ENCODE measurements at regions of chr11 and their contacts with region 1.

Region 1: GRCh38 chr11:125625630-125626287 is 796 bp downstream of the CHEK1 start:
- DNase-seq: peak; percentile 82
- ATAC-seq: peak; percentile 94
- H3K4me3 ChIP-seq: peak overlapping the region; percentile 79 to 90 (median 79)
- H3K27ac ChIP-seq: peak overlapping the region; percentile 87
- H3K4me1 ChIP-seq: peaks cover 29% of the 10 kb centered on the region
- H3K27me3 ChIP-seq: no peaks in the 10 kb centered on the region; a peak in 1 of 5 replicates
- CTCF ChIP-seq: peak; percentile 42
- EP300 ChIP-seq: peak in 1 of 2 experiments; percentile 45; a peak in 1 of 4 replicates
- POLR2A ChIP-seq: peak; percentile 61; a peak in 3 of 4 replicates
- RAD21 ChIP-seq: peak; percentile 42

Region 2: GRCh38 chr11:125568970-125569914 is 56.5 kb before region 1 on chr11 and contains the start of gene EI24:
- CTCF ChIA-PET with region 1: no interaction called
- POLR2A ChIA-PET with region 1: no interaction called
- in situ Hi-C with region 1: no loop called
- intact Hi-C with region 1: loop called (anchors 1 kb)
- DNase-seq: peak; percentile 84
- ATAC-seq: peak; percentile 98
- H3K4me3 ChIP-seq: peak within 1 kb of the TSS; percentile 77 to 93 (median 82)
- H3K27ac ChIP-seq: peak within 1 kb of the TSS; percentile 68
- H3K4me1 ChIP-seq: peaks cover 46% of the 10 kb centered on the region
- H3K27me3 ChIP-seq: no peaks in the 10 kb centered on the region; a peak in 1 of 5 replicates
- CTCF ChIP-seq: peak; percentile 85
- EP300 ChIP-seq: no peak
- POLR2A ChIP-seq: peak; percentile 40 to 70; a peak in 3 of 4 replicates
- RAD21 ChIP-seq: peak; percentile 52; the same call in 1 of the 2 replicates
- total RNA-seq, gene EI24: 126 and 138 TPM in 2 replicates

Region 3: GRCh38 chr11:125592305-125593112 is 33.2 kb before region 1 on chr11 and contains the start of gene STT3A:
- CTCF ChIA-PET with region 1: no interaction called
- POLR2A ChIA-PET with region 1: interaction called, 24 read pairs
- in situ Hi-C with region 1: no loop called
- intact Hi-C with region 1: loop called (anchors 2 kb)
- DNase-seq: peak; percentile 99
- ATAC-seq: peak; percentile 97
- H3K4me3 ChIP-seq: peak within 1 kb of the TSS; percentile 90 to 96 (median 95)
- H3K27ac ChIP-seq: peak within 1 kb of the TSS; percentile 91
- H3K4me1 ChIP-seq: peaks cover 40% of the 10 kb centered on the region
- H3K27me3 ChIP-seq: no peaks in the 10 kb centered on the region; a peak in 1 of 5 replicates
- CTCF ChIP-seq: 0 out of 2 replicates have a peak, but pooled peaks have one; percentile 5
- EP300 ChIP-seq: 0 out of 4 replicates have a peak, but pooled peaks of 1 of the 2 experiments have one; percentile 25
- POLR2A ChIP-seq: peak; percentile 78 to 94
- RAD21 ChIP-seq: no peak
- total RNA-seq, gene STT3A: 141 and 229 TPM in 2 replicates

Region 4: GRCh38 chr11:125649465-125650166 is 23.9 kb after region 1 on chr11:
- CTCF ChIA-PET with region 1: no interaction called
- POLR2A ChIA-PET with region 1: no interaction called
- in situ Hi-C with region 1: no loop called
- intact Hi-C with region 1: no loop called
- DNase-seq: no peak
- ATAC-seq: no peak
- H3K4me3 ChIP-seq: no peak overlapping the region
- H3K27ac ChIP-seq: no peak overlapping the region
- H3K4me1 ChIP-seq: no peaks in the 10 kb centered on the region
- H3K27me3 ChIP-seq: no peaks in the 10 kb centered on the region
- CTCF ChIP-seq: no peak
- EP300 ChIP-seq: no peak
- POLR2A ChIP-seq: no peak
- RAD21 ChIP-seq: no peak

Region 5: DNA sequence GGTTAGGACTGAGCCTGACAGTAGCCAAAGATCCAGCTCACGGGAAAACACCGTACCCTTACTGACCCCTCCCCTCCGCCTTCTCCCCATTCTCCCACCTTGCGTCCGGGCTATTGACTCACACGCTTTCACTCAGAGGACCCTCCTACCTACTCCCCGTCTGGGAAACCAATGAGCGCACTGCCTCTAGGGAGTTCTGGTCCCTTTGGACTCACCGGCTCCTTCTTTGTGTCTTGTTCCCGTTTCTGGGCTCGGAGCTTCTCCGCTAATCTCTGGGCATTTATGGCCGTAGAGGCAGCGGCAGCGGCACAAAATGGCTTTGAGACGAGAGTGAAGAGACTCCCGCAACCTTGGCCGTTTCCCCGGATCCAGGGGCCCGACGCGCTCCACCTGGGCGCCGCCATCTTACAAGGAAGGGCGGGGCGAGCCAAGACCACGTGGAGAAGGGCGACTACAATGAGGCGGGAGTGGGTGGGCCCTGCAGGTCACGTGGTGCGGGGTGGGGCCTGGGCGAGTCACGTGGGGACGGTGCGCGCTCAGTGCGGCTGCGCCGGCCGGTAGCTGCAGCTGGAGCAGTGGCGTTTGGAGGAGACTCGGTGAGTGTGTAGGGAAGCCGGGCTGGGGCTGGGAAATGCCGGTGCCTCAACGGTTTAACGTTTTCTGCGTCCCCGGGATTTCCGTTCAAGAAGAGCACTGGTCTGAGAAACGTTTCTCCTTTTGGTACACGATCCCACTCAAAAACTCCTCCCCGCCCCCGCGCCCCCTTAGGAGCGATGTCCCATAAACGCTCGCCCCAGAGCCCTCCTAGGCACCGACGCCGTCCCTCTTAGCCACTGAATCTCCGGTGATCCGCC is 585.7 kb after region 1 on chr11 and contains the starts of genes FAM118B and RPUSD4:
- CTCF ChIA-PET with region 1: no interaction called
- POLR2A ChIA-PET with region 1: interaction called, 3 read pairs
- in situ Hi-C with region 1: loop called (anchors 25 kb)
- intact Hi-C with region 1: no loop called
- DNase-seq: peak; percentile 90
- ATAC-seq: peak; percentile 93
- H3K4me3 ChIP-seq: peak within 1 kb of the TSS; percentile 76 to 97 (median 90)
- H3K27ac ChIP-seq: peak within 1 kb of the TSS; percentile 82
- H3K4me1 ChIP-seq: peaks cover 42% of the 10 kb centered on the region
- H3K27me3 ChIP-seq: peaks cover 0 to 2% of the 10 kb centered on the region in 2 experiments; a peak in 1 of 5 replicates
- CTCF ChIP-seq: peak; percentile 26; the same call in 1 of the 2 replicates
- EP300 ChIP-seq: no peak
- POLR2A ChIP-seq: peak; percentile 87 to 91
- RAD21 ChIP-seq: 0 out of 2 replicates have a peak, but pooled peaks have one; percentile 6
- total RNA-seq, gene FAM118B: 25.7 and 30.9 TPM in 2 replicates
- total RNA-seq, gene RPUSD4: 45.0 and 45.6 TPM in 2 replicates